ENCODE measurements at regions of chr7 and their contacts with region 1.

Region 1: GRCh38 chr7:138865843-138866242 is 67.8 kb upstream of the ATP6V0A4 start:
- DNase-seq: peak in 7 of 9 experiments; percentile 19 to 66 (median 56)
- ATAC-seq: peak; percentile 87
- H3K4me3 ChIP-seq: no peak overlapping the region
- H3K4me3 Mint-ChIP-seq: no peak overlapping the region
- H3K27ac ChIP-seq: no peak overlapping the region
- H3K27ac Mint-ChIP-seq: no peak overlapping the region
- H3K4me1 ChIP-seq: no peaks in the 10 kb centered on the region
- H3K4me1 Mint-ChIP-seq: peaks cover 4% of the 10 kb centered on the region
- H3K27me3 ChIP-seq: no peaks in the 10 kb centered on the region
- H3K27me3 Mint-ChIP-seq: peaks cover 3% of the 10 kb centered on the region
- CTCF ChIP-seq: peak; percentile 52

Region 2: GRCh38 chr7:138161600-138162081 is 704.2 kb before region 1 on chr7:
- CTCF ChIA-PET with region 1: interaction called, 8 read pairs
- POLR2A ChIA-PET with region 1: no interaction called
- intact Hi-C with region 1: loop called in 1 of 2 experiments (anchors 1 kb)
- DNase-seq: peak; percentile 42 to 93 (median 74)
- ATAC-seq: peak; percentile 99
- H3K4me3 ChIP-seq: no peak overlapping the region
- H3K4me3 Mint-ChIP-seq: no peak overlapping the region
- H3K27ac ChIP-seq: no peak overlapping the region
- H3K27ac Mint-ChIP-seq: no peak overlapping the region
- H3K4me1 ChIP-seq: peaks cover 5% of the 10 kb centered on the region
- H3K4me1 Mint-ChIP-seq: no peaks in the 10 kb centered on the region
- H3K27me3 ChIP-seq: no peaks in the 10 kb centered on the region
- H3K27me3 Mint-ChIP-seq: peaks cover 3% of the 10 kb centered on the region
- CTCF ChIP-seq: peak; percentile 69

Region 3: GRCh38 chr7:138449580-138449979 is 416.3 kb before region 1 on chr7:
- CTCF ChIA-PET with region 1: no interaction called
- POLR2A ChIA-PET with region 1: no interaction called
- intact Hi-C with region 1: loop called (anchors 2 to 5 kb)
- DNase-seq: peak in 8 of 9 experiments; percentile 19 to 62 (median 41)
- ATAC-seq: no peak
- H3K4me3 ChIP-seq: no peak overlapping the region
- H3K4me3 Mint-ChIP-seq: no peak overlapping the region
- H3K27ac ChIP-seq: no peak overlapping the region
- H3K27ac Mint-ChIP-seq: no peak overlapping the region
- H3K4me1 ChIP-seq: no peaks in the 10 kb centered on the region
- H3K4me1 Mint-ChIP-seq: no peaks in the 10 kb centered on the region
- H3K27me3 ChIP-seq: no peaks in the 10 kb centered on the region
- H3K27me3 Mint-ChIP-seq: no peaks in the 10 kb centered on the region
- CTCF ChIP-seq: peak; percentile 43